Cardiac septum (tissue), 1 donor: ENCODE measurements at regions of chr10 and their contacts with region 1.

Region 1: GRCh38 chr10:97612386-97612785 is 20.9 kb downstream of the MORN4 start:
- DNase-seq: no peak

Region 2: DNA sequence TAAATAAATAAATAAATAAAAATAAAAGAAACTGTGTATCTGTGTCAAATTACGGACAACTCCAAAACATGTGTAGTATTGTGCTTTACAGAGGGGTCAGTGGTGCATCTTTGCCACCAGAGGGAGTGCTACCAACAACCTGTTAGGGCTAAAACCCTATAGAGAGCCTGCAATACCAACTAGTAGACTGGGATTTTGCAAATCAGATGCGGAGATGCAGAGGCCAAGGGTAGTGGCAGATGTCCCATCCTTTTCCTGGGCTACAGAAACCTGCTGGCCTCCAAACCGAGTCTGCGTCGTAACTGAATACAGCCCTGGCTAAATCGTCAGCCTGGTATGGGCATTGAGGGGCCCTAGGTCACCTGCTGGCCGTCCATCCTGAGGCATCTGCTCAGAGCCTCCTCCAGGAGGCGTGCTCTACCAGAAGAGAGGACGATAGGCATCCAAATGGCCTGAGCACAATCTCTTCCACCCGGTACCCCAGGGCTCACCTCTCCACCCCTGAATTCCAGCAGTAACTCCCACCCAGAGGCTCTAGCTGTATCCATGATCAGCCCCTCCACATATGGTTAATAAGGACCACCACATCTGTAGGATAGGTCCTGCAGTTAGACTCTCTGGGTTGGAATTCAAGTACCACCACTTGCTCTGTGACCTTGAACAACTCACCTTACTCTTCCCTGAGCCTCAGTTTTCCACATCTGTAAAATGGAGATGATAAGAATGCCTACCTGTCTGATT is 205.0 kb before region 1 on chr10:
- intact Hi-C with region 1: loop called (anchors 2 kb)
- DNase-seq: peak; percentile 84

Region 3: DNA sequence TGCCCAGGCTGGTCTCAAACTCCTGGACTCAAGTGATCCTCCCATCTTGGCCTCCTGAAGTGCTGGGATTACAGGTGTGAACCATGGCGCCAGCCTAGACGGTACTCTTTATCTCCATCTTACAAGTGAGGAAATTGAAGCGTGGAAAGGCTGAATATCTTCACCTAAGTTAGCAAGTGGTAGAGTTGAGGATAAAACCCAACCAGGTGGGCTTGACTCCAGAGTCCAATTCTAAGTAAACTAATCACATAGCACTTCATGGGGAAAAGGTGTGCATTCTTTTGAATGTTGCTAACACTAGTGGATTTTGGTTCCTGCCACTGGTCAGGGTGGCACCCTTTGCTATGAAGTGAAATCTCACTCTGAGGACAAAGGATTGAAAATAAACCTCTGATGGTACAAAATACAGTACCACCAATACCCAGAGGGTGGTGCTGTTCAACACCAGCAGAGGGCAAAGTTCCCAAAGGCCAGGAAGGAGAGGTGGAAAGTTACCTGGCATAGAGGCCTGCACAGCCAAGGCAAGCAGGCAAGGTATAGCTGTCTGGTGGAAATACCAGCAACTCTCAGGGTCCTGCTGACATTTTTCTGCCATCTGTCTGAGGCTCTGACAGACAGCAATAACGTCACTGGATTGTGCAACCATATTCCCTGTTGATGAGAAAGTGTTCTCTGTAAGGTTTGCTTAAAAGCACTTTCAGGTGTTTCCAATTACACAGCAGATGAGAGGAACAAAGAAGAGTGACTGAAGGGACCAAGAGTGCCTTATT is 148.8 kb before region 1 on chr10:
- intact Hi-C with region 1: loop called (anchors 5 kb)
- DNase-seq: no peak

Region 4: GRCh38 chr10:97574374-97575119 is 37.8 kb before region 1 on chr10:
- intact Hi-C with region 1: loop called (anchors 1 kb)
- DNase-seq: peak; percentile 85